Right ventricle myocardium inferior (tissue), 1 donor: ENCODE measurements at regions of chr12 and their contacts with region 1.

Region 1: GRCh38 chr12:117212563-117213190 is 22.4 kb upstream of the FBXO21 start:
- DNase-seq: no peak
- ATAC-seq: peak; percentile 77

Region 2: GRCh38 chr12:117587631-117588287 is 375.1 kb after region 1 on chr12:
- intact Hi-C with region 1: loop called (anchors 2 kb)
- DNase-seq: peak; percentile 72
- ATAC-seq: peak; percentile 46

Region 3: GRCh38 chr12:117857632-117858612 is 645.2 kb after region 1 on chr12:
- intact Hi-C with region 1: loop called (anchors 5 kb)
- DNase-seq: no peak
- ATAC-seq: no peak